ENCODE measurements at regions of chr14 and their contacts with region 1.

Region 1: GRCh38 chr14:21103710-21104447 is 3.0 kb downstream of the TMEM253 start:
- DNase-seq: peak; percentile 92
- H3K4me3 ChIP-seq: peak overlapping the region; percentile 82 to 86
- H3K27ac ChIP-seq: peak overlapping the region; percentile 90 to 99
- H3K4me1 ChIP-seq: peaks cover 18 to 39% of the 10 kb centered on the region in 2 experiments
- H3K27me3 ChIP-seq: no peaks in the 10 kb centered on the region
- CTCF ChIP-seq: peak; percentile 65
- EP300 ChIP-seq: peak in 1 of 2 experiments; percentile 82; a peak in 2 of 4 replicates
- RAD21 ChIP-seq: no peak

Region 2: DNA sequence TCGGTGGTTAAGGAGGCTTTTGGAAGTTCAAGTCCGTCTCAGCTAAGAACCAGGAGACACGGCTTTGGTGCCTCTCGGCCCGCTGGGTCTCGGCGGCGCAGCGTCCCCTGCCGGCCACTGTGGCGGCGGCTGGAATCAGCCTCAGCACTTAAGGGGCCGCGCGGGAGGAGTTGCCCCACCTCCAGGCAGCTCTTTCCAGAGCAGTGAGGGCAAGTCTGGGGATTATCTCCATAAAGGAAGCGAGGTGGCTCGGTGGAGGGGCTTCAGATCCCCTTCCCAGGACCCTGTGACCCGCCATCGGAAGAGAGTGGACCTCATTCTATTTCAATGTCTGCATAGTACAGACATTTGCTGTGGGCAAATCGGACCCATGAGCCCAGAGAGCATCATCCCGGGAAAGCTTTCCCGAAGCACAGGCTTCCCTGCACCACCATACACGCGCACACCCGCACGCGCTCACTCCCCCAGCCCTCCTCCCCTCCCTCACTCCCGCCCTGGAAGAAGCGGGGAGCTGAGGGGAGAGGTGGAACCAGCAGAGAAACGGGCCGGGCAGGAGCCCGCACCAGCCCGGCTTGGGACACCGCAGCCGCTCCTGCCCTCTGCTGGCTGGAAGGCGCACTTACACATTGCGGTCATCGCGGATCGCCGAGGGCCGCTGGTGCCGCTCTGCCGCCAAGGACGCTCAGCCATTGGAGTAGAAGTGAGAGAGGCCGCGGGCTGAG is 132.7 kb before region 1 on chr14:
- CTCF ChIA-PET with region 1: interaction called, 21 read pairs
- POLR2A ChIA-PET with region 1: no interaction called
- DNase-seq: peak; percentile 87
- H3K4me3 ChIP-seq: peak overlapping the region; percentile 59 to 68
- H3K27ac ChIP-seq: peak overlapping the region in 1 of 2 experiments; percentile 36; a peak in 1 of 4 replicates
- H3K4me1 ChIP-seq: peaks cover 0 to 3% of the 10 kb centered on the region in 2 experiments; a peak in 1 of 4 replicates
- H3K27me3 ChIP-seq: peaks cover 9% of the 10 kb centered on the region; the same call in 1 of the 2 replicates
- CTCF ChIP-seq: peak; percentile 91
- EP300 ChIP-seq: no peak
- RAD21 ChIP-seq: peak; percentile 62

Region 3: GRCh38 chr14:21003788-21004346 is 100.0 kb before region 1 on chr14:
- CTCF ChIA-PET with region 1: interaction called, 555 read pairs
- POLR2A ChIA-PET with region 1: interaction called, 4 read pairs
- DNase-seq: no peak
- H3K4me3 ChIP-seq: no peak overlapping the region
- H3K27ac ChIP-seq: no peak overlapping the region
- H3K4me1 ChIP-seq: no peaks in the 10 kb centered on the region; a peak in 1 of 4 replicates
- H3K27me3 ChIP-seq: no peaks in the 10 kb centered on the region
- CTCF ChIP-seq: no peak
- EP300 ChIP-seq: no peak
- RAD21 ChIP-seq: no peak

Region 4: DNA sequence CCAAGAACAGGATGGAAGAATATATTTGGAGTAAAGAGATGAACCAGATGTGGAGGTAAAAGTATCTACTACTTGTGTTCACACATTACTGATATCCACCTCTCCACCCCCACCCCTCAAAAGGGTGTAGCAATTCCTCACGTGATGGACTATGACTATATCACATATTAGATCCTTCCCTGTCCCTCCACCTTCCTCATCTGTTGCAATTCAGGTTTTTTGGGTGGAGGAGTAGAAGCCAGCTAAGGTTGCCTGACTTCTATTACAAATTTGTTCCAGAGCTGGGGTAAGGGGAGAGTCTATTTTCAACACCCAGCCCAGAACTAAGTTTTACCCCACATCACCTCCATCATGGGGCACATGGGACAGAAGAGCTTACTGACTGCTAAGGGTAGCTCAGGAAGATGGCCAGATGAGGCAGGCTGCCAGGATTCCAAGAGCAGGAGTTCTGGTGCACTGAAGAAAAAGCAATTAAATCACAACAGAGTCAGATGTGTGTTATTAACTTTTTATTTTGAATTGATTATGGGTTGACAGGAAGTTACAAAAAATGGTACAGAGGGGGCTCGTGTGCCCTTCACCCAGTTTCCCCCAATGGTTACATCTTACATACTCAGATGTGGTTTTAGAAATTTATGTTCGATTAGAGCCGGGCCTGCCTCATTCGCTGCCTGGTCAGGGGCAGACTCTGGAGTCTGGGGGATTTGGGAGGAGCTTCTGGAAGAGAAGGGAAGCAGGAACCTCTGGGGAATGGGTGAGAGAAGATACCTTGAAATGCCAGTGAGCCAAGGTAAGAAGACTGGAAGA is 71.3 kb before region 1 on chr14:
- CTCF ChIA-PET with region 1: interaction called, 17 read pairs
- POLR2A ChIA-PET with region 1: no interaction called
- DNase-seq: no peak
- H3K4me3 ChIP-seq: no peak overlapping the region
- H3K27ac ChIP-seq: no peak overlapping the region
- H3K4me1 ChIP-seq: no peaks in the 10 kb centered on the region
- H3K27me3 ChIP-seq: peaks cover 42% of the 10 kb centered on the region; the same call in 1 of the 2 replicates
- CTCF ChIP-seq: no peak
- EP300 ChIP-seq: no peak
- RAD21 ChIP-seq: no peak

Region 5: GRCh38 chr14:21049271-21049673 is 54.6 kb before region 1 on chr14:
- CTCF ChIA-PET with region 1: interaction called, 13 read pairs
- POLR2A ChIA-PET with region 1: no interaction called
- DNase-seq: no peak
- H3K4me3 ChIP-seq: no peak overlapping the region
- H3K27ac ChIP-seq: no peak overlapping the region
- H3K4me1 ChIP-seq: peaks cover 0 to 4% of the 10 kb centered on the region in 2 experiments; a peak in 1 of 4 replicates
- H3K27me3 ChIP-seq: no peaks in the 10 kb centered on the region
- CTCF ChIP-seq: no peak
- EP300 ChIP-seq: no peak
- RAD21 ChIP-seq: no peak

Region 6: DNA sequence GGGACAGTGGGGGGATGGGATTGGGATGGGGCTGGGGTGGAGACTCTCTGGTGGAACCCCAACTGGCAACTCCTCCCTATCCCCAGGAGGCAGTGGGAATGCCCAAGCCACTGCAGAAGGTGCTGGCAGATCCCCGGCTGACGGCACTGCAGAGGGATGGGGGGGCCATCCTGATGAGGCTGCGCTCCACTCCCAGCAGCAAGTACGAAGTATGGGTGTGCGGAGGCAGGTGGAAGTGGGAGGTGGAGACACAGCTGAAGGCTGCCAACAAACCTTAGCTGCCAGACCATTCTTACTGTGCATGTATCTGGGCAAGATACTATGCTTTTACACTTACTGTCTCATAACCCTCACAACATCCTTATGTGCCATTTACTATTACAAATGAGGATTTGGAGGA is 25.6 kb before region 1 on chr14:
- CTCF ChIA-PET with region 1: interaction called, 296 read pairs
- POLR2A ChIA-PET with region 1: interaction called, 3 read pairs
- DNase-seq: no peak
- H3K4me3 ChIP-seq: no peak overlapping the region
- H3K27ac ChIP-seq: no peak overlapping the region
- H3K4me1 ChIP-seq: peaks cover 0 to 13% of the 10 kb centered on the region in 2 experiments; a peak in 1 of 4 replicates
- H3K27me3 ChIP-seq: no peaks in the 10 kb centered on the region
- CTCF ChIP-seq: no peak
- EP300 ChIP-seq: no peak
- RAD21 ChIP-seq: no peak

Region 7: GRCh38 chr14:21092273-21093011 is 11.4 kb before region 1 on chr14:
- CTCF ChIA-PET with region 1: interaction called, 283 read pairs
- POLR2A ChIA-PET with region 1: interaction called, 12 read pairs
- DNase-seq: peak; percentile 95
- H3K4me3 ChIP-seq: peak overlapping the region in 1 of 2 experiments; percentile 36; a peak in 1 of 4 replicates
- H3K27ac ChIP-seq: no peak overlapping the region; a peak in 1 of 4 replicates
- H3K4me1 ChIP-seq: peaks cover 21 to 28% of the 10 kb centered on the region in 2 experiments
- H3K27me3 ChIP-seq: no peaks in the 10 kb centered on the region
- CTCF ChIP-seq: peak; percentile 97
- EP300 ChIP-seq: no peak
- RAD21 ChIP-seq: peak; percentile 92

Measured in SK-N-SH (cell line).